AG04450 (cell line): ENCODE measurements at regions of chr14 and their contacts with region 1.

Region 1: GRCh38 chr14:93939304-93940229 is 12.4 kb downstream of the FAM181A start:
- DNase-seq: peak; percentile 29
- H3K4me3 ChIP-seq: peak overlapping the region; percentile 45
- H3K27ac ChIP-seq: no peak overlapping the region
- H3K27me3 ChIP-seq: peaks cover 9% of the 10 kb centered on the region
- CTCF ChIP-seq: peak; percentile 63

Region 2: DNA sequence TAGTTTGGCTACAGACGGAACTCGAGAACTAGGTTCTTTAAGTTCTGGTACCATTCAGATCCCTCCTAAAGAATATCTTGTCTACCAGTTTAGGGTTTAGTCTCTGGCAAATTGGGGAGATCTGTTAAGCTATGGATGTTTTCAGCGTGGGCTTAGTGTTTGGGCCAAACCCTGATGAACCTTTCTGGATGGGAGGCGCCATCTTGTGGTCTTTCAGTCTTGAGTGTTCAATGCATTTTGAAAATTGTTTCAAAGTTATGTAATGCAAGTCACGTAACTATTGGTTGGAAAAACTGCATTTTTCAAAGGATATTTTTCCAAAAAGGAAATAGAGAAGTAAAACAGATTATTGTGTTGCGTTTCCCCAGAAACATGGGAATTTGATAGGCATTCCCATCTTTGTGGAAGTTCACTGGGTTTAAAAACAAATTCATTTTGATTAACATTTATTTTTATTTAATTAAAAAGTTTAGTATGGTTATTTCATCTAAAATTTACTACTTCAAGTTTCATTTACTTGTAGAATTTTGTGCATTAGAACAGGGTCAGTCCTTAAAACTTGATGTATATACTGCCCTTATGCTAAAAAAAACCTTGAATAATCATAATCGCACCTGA is 320.3 kb before region 1 on chr14:
- CTCF ChIA-PET with region 1: no interaction called
- POLR2A ChIA-PET with region 1: no interaction called
- DNase-seq: no peak
- H3K4me3 ChIP-seq: no peak overlapping the region
- H3K27ac ChIP-seq: no peak overlapping the region
- H3K27me3 ChIP-seq: no peaks in the 10 kb centered on the region
- CTCF ChIP-seq: peak; percentile 60

Region 3: GRCh38 chr14:93953263-93953662 is 13.7 kb after region 1 on chr14:
- CTCF ChIA-PET with region 1: interaction called, 27 read pairs
- POLR2A ChIA-PET with region 1: no interaction called
- DNase-seq: no peak
- H3K4me3 ChIP-seq: no peak overlapping the region
- H3K27ac ChIP-seq: no peak overlapping the region
- H3K27me3 ChIP-seq: no peaks in the 10 kb centered on the region
- CTCF ChIP-seq: no peak

Region 4: GRCh38 chr14:93975791-93976476 is 36.4 kb after region 1 on chr14:
- CTCF ChIA-PET with region 1: interaction called, 11 read pairs
- POLR2A ChIA-PET with region 1: no interaction called
- DNase-seq: no peak
- H3K4me3 ChIP-seq: peak overlapping the region; percentile 42
- H3K27ac ChIP-seq: peak overlapping the region; percentile 65
- H3K27me3 ChIP-seq: no peaks in the 10 kb centered on the region
- CTCF ChIP-seq: 0 out of 2 replicates have a peak, but pooled peaks have one; percentile 4

Region 5: GRCh38 chr14:93994919-93995682 is 55.5 kb after region 1 on chr14:
- CTCF ChIA-PET with region 1: interaction called, 270 read pairs
- POLR2A ChIA-PET with region 1: no interaction called
- DNase-seq: peak; percentile 21
- H3K4me3 ChIP-seq: no peak overlapping the region
- H3K27ac ChIP-seq: peak overlapping the region; percentile 61
- H3K27me3 ChIP-seq: peaks cover 5% of the 10 kb centered on the region
- CTCF ChIP-seq: no peak

Region 6: GRCh38 chr14:94026173-94026888 is 86.8 kb after region 1 on chr14 and contains the start of gene OTUB2:
- CTCF ChIA-PET with region 1: interaction called, 22 read pairs
- POLR2A ChIA-PET with region 1: no interaction called
- DNase-seq: peak; percentile 95
- H3K4me3 ChIP-seq: peak within 1 kb of the TSS; percentile 66
- H3K27ac ChIP-seq: no peak within 1 kb of the TSS
- H3K27me3 ChIP-seq: no peaks in the 10 kb centered on the region
- CTCF ChIP-seq: no peak
- polyA plus RNA-seq, gene OTUB2: 2.1 and 2.3 TPM in 2 replicates

Region 7: GRCh38 chr14:94051115-94051514 is 111.5 kb after region 1 on chr14:
- CTCF ChIA-PET with region 1: interaction called, 13 read pairs
- POLR2A ChIA-PET with region 1: no interaction called
- DNase-seq: peak; percentile 15
- H3K4me3 ChIP-seq: no peak overlapping the region
- H3K27ac ChIP-seq: no peak overlapping the region
- H3K27me3 ChIP-seq: no peaks in the 10 kb centered on the region
- CTCF ChIP-seq: peak; percentile 57

Region 8: DNA sequence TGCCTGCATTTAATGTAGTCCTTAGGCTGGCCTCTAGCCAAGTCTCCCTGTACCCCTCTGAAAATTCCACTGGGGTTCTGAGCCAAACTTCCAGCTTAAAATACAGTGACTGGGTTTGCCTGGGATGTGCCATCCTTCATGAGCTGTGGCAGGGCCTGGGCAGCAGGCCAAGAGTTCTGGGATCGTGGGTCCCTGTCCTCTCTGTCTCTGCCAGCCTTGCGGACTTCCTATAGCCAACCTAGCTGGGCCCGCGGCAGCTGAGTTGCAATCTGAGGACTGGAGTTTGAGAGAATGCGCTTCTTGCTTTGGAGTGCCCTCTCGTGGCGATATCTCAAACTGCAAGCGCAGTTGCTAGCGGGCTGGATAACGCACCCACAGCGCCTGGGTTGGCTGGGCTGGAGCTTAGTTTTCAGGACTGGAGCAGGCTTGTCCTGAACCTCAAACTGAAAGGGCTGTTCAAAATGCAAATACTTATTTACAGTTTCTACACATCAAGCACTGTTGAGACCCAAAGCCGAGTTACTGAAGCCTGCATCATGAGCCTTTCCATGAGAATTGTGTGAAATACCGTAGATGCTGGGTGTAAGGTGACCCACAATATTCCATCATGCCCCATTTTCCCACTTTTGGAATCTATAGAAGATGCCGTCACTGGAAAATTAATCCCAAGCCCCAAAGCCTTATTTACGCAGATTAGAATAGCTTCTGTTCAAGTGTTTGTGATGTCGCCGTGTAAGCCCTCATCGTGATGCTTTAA is 197.2 kb after region 1 on chr14:
- CTCF ChIA-PET with region 1: interaction called, 65 read pairs
- POLR2A ChIA-PET with region 1: no interaction called
- DNase-seq: peak; percentile 57
- H3K4me3 ChIP-seq: no peak overlapping the region
- H3K27ac ChIP-seq: no peak overlapping the region
- H3K27me3 ChIP-seq: peaks cover 5% of the 10 kb centered on the region
- CTCF ChIP-seq: peak; percentile 99